B cell (primary cell): ENCODE measurements at regions of chr1 and their contacts with region 1.

Region 1: DNA sequence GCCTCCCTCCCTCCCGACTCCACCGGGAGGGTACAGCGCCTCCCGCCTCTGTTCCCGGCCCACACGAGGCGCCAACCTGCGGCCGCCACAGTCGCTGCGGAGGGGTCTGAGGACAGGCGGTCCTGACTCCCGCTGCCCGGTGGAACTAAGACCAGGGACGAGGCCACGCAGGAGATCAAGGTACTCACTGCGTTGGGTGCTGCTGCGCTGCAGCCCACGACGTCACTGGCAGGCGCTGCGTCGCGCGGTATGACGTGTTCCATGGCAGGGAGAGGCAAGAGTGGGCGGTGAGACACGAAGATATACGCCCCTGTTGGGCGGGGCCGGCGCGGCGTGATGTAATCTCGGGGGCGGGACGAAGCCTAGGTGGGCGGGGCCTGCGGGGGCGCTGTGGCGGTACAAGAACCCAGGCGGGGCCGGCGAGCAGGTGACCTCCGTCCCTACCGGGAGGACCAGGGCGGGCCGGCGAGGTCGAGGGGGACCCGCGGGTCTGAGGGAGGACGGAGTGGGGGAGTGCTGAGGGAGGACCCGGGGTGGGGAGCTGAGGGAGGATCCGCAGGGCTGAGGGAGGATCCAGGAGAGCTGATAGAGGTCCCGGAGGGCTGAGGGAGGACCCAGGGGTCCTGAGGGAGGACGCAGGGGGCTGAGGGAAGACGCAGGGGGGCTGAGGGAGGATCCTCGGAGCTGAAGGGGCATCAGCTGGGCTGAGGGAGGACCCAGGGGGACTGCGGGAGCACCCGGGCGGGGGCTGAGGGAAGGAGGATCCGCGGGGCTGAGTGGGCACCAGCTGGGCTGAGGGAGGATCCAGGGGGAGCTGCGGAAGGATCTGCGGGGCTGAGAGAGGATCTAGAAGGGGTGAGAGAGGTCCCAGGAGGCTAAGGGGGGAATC is at the start of gene MRPL55:
- DNase-seq: peak; percentile 98
- ATAC-seq: peak; percentile 99
- H3K4me3 ChIP-seq: peak within 1 kb of the TSS; percentile 60 to 97 (median 95)
- H3K4me3 Mint-ChIP-seq: peak within 1 kb of the TSS; percentile 92
- H3K27ac ChIP-seq: peak within 1 kb of the TSS; percentile 95
- H3K27ac Mint-ChIP-seq: peak within 1 kb of the TSS; percentile 87
- H3K4me1 ChIP-seq: peaks cover 17 to 26% of the 10 kb centered on the region in 2 donors
- H3K4me1 Mint-ChIP-seq: peaks cover 25% of the 10 kb centered on the region
- H3K27me3 ChIP-seq: no peaks in the 10 kb centered on the region
- H3K27me3 Mint-ChIP-seq: no peaks in the 10 kb centered on the region
- CTCF ChIP-seq: no peak
- total RNA-seq, gene MRPL55: 38.9 and 42.4 TPM in 2 replicates

Region 2: DNA sequence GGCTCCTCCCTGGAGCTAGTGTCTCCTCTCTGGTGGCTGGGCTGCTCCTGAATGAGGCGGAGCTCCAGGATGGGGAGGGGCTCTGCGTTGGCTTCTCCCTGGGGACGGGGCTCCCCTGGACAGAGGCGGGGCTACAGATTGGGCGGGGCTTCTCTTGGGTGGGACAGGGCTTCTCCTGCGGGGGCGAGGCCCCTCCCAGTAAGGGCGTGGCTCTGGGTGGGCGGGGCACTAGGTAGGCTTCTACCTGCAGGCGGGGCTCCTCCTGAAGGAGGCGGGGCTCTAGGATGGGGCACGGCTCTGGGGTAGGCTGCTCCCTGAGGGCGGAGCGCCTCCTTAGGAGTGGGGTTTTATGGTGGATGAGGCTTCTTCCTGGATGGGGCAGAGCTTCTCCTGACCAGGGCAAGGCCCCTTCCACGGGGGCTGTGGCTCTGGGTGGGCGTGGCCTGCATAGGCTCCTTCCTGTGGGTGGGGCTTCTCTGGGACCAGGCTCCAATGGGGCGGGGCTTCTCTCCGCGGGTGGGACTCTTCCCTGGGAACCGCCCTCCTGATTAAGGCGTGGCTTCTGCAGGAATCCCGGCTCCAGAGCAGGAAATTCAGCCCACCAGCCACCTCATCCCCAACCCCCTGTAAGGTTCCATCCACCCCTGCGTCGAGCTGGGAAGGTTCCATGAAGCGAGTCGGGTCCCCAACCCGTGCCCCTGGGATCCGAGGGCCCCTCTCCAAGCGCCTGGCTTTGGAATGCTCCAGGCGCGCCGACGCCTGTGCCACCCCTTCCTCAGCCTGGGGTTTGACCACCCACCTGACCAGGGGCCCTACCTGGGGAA is 49.5 kb before region 1 on chr1:
- CTCF ChIA-PET with region 1: no interaction called
- POLR2A ChIA-PET with region 1: interaction called, 13 read pairs
- intact Hi-C with region 1: no loop called
- DNase-seq: peak; percentile 68
- ATAC-seq: peak; percentile 68
- H3K4me3 ChIP-seq: peak overlapping the region in 4 of 5 experiments; percentile 15 to 51 (median 38)
- H3K4me3 Mint-ChIP-seq: peak overlapping the region; percentile 61
- H3K27ac ChIP-seq: no peak overlapping the region
- H3K27ac Mint-ChIP-seq: no peak overlapping the region
- H3K4me1 ChIP-seq: peaks cover 23 to 35% of the 10 kb centered on the region in 2 donors
- H3K4me1 Mint-ChIP-seq: peaks cover 10% of the 10 kb centered on the region
- H3K27me3 ChIP-seq: peaks cover 0 to 71% (median 42%) of the 10 kb centered on the region in 4 experiments
- H3K27me3 Mint-ChIP-seq: peaks cover 21% of the 10 kb centered on the region
- CTCF ChIP-seq: no peak

Region 3: DNA sequence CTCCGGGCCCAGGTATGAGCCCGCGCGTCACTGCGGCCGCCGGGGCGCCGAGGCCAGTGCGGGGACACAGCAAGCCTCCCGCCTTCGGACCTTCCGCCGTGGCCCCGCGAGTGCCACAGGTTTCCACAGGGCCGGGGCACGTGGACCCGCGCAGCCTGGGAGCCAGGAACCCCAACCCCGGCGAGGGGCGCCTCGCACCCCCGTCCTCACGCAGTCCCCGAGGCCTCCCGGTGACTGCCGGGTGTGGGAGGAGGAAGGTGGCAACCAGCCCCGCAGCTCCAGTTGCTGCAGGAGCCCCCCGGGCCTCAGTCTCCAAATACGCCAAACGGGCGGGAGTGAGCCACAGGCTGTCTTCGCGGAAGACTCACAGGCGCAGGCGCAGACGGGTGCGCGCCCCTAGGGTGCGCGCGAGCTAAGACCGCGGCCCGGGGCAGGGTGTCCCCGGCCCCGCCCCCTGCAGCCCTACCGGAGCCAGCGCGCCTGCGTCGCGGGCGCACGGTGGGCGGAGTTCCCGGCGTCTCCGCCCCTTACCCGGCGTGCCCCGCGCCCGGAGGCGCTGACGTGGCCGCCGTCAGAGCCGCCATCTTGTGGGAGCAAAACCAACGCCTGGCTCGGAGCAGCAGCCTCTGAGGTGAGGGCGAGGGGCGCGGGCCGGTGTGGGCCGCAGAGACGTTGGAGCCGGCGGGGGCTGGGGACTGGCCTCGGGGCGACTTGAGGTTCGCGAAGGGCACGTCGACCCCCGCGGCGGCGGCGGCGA is 27.0 kb before region 1 on chr1 and contains the start of gene ARF1:
- CTCF ChIA-PET with region 1: interaction called, 5 read pairs
- POLR2A ChIA-PET with region 1: interaction called, 6 read pairs
- intact Hi-C with region 1: loop called (anchors 1 kb)
- DNase-seq: peak; percentile 96
- ATAC-seq: peak; percentile 92
- H3K4me3 ChIP-seq: peak within 1 kb of the TSS; percentile 78 to 97 (median 91)
- H3K4me3 Mint-ChIP-seq: peak within 1 kb of the TSS; percentile 94
- H3K27ac ChIP-seq: peak within 1 kb of the TSS; percentile 78 to 96
- H3K27ac Mint-ChIP-seq: peak within 1 kb of the TSS; percentile 93
- H3K4me1 ChIP-seq: peaks cover 44 to 50% of the 10 kb centered on the region in 2 donors
- H3K4me1 Mint-ChIP-seq: peaks cover 46% of the 10 kb centered on the region
- H3K27me3 ChIP-seq: no peaks in the 10 kb centered on the region
- H3K27me3 Mint-ChIP-seq: no peaks in the 10 kb centered on the region
- CTCF ChIP-seq: no peak
- total RNA-seq, gene ARF1: 193 and 195 TPM in 2 replicates

Region 4: DNA sequence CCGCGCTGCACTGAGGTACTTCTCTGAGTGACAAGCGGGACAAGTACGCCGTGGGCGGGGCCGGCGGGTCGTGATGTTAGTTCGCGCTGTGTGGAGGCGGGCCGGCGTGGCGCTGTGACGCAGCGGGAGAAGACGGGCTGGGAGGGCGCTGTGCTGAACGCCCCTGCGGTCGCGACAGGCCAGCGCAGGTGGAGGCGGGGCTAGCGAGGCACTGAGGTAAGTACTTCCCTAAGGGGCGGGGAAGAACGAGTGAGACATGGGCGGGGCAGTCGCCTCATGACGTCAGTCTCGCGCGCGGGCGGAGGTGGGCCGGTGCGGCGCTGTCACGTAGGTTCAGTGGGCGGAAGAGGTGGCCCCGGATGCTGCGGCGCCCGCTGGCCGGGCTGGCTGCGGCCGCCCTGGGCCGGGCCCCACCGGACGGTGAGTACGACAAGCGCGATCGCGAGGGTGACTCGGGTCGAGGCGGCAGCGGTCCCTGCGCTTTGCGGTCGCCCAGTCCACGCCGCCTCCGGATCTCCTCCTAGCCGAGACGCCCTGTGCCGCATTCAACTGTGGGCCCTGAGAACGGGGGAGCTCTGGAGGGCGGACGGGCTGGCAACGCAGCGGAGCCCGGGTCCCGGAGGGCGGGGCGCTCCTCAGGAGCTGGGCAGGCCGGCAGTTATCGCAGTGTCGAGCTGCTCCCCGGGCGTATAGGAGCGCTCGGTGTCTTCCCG is 30.8 kb after region 1 on chr1 and contains the start of gene GUK1:
- CTCF ChIA-PET with region 1: no interaction called
- POLR2A ChIA-PET with region 1: interaction called, 3 read pairs
- intact Hi-C with region 1: loop called (anchors 1 kb)
- DNase-seq: peak; percentile 100
- ATAC-seq: peak; percentile 91
- H3K4me3 ChIP-seq: peak within 1 kb of the TSS; percentile 70 to 87 (median 82)
- H3K4me3 Mint-ChIP-seq: peak within 1 kb of the TSS; percentile 96
- H3K27ac ChIP-seq: peak within 1 kb of the TSS; percentile 95 to 98
- H3K27ac Mint-ChIP-seq: peak within 1 kb of the TSS; percentile 100
- H3K4me1 ChIP-seq: peaks cover 55 to 74% of the 10 kb centered on the region in 2 donors
- H3K4me1 Mint-ChIP-seq: peaks cover 68% of the 10 kb centered on the region
- H3K27me3 ChIP-seq: no peaks in the 10 kb centered on the region
- H3K27me3 Mint-ChIP-seq: no peaks in the 10 kb centered on the region
- CTCF ChIP-seq: no peak
- total RNA-seq, gene GUK1: 123 and 125 TPM in 2 replicates

Region 5: GRCh38 chr1:228165372-228166169 is 56.3 kb after region 1 on chr1 and contains the start of gene IBA57:
- CTCF ChIA-PET with region 1: interaction called, 4 read pairs
- POLR2A ChIA-PET with region 1: interaction called, 6 read pairs
- intact Hi-C with region 1: loop called (anchors 1 kb)
- DNase-seq: peak; percentile 100
- ATAC-seq: peak; percentile 84
- H3K4me3 ChIP-seq: peak within 1 kb of the TSS; percentile 64 to 88 (median 74)
- H3K4me3 Mint-ChIP-seq: peak within 1 kb of the TSS; percentile 93
- H3K27ac ChIP-seq: peak within 1 kb of the TSS; percentile 95 to 98
- H3K27ac Mint-ChIP-seq: peak within 1 kb of the TSS; percentile 99
- H3K4me1 ChIP-seq: peaks cover 14 to 26% of the 10 kb centered on the region in 2 donors
- H3K4me1 Mint-ChIP-seq: peaks cover 28% of the 10 kb centered on the region
- H3K27me3 ChIP-seq: peaks cover 0 to 5% (median 0%) of the 10 kb centered on the region in 4 experiments
- H3K27me3 Mint-ChIP-seq: no peaks in the 10 kb centered on the region
- CTCF ChIP-seq: peak; percentile 73
- total RNA-seq, gene IBA57: 12.8 and 15.3 TPM in 2 replicates

Region 6: GRCh38 chr1:228275739-228276421 is 166.6 kb after region 1 on chr1:
- CTCF ChIA-PET with region 1: no interaction called
- POLR2A ChIA-PET with region 1: no interaction called
- intact Hi-C with region 1: loop called (anchors 10 kb)
- DNase-seq: peak; percentile 89
- ATAC-seq: peak; percentile 96
- H3K4me3 ChIP-seq: peak overlapping the region in 4 of 5 experiments; percentile 55 to 73 (median 67)
- H3K4me3 Mint-ChIP-seq: peak overlapping the region; percentile 82
- H3K27ac ChIP-seq: peak overlapping the region; percentile 36 to 44
- H3K27ac Mint-ChIP-seq: peak overlapping the region; percentile 53
- H3K4me1 ChIP-seq: peaks cover 5 to 19% of the 10 kb centered on the region in 2 donors
- H3K4me1 Mint-ChIP-seq: peaks cover 11% of the 10 kb centered on the region
- H3K27me3 ChIP-seq: no peaks in the 10 kb centered on the region
- H3K27me3 Mint-ChIP-seq: no peaks in the 10 kb centered on the region
- CTCF ChIP-seq: no peak

Region 7: GRCh38 chr1:229507951-229508822 is 1398.9 kb after region 1 on chr1 and contains the start of gene NUP133:
- CTCF ChIA-PET with region 1: no interaction called
- POLR2A ChIA-PET with region 1: no interaction called
- intact Hi-C with region 1: loop called (anchors 10 kb)
- DNase-seq: peak; percentile 99
- ATAC-seq: peak; percentile 95
- H3K4me3 ChIP-seq: peak within 1 kb of the TSS; percentile 87 to 99 (median 92)
- H3K4me3 Mint-ChIP-seq: peak within 1 kb of the TSS; percentile 96
- H3K27ac ChIP-seq: peak within 1 kb of the TSS; percentile 93 to 94
- H3K27ac Mint-ChIP-seq: peak within 1 kb of the TSS; percentile 99
- H3K4me1 ChIP-seq: peaks cover 14 to 17% of the 10 kb centered on the region in 2 donors
- H3K4me1 Mint-ChIP-seq: peaks cover 23% of the 10 kb centered on the region
- H3K27me3 ChIP-seq: no peaks in the 10 kb centered on the region
- H3K27me3 Mint-ChIP-seq: no peaks in the 10 kb centered on the region
- CTCF ChIP-seq: no peak
- total RNA-seq, gene NUP133: 49.7 and 50.5 TPM in 2 replicates